Ascending aorta (tissue), 2 donors: ENCODE measurements at regions of chr5 and their contacts with region 1.

Region 1: GRCh38 chr5:123036391-123037103 is at the start of gene PPIC:
- DNase-seq: peak; percentile 19 to 92
- H3K4me3 ChIP-seq: peak within 1 kb of the TSS; percentile 68 to 97
- H3K27ac ChIP-seq: peak within 1 kb of the TSS; percentile 94 to 96
- H3K4me1 ChIP-seq: peaks cover 0 to 9% of the 10 kb centered on the region in 2 donors
- H3K27me3 ChIP-seq: no peaks in the 10 kb centered on the region
- CTCF ChIP-seq: no peak
- total RNA-seq, gene PPIC: 29.3 TPM

Region 2: DNA sequence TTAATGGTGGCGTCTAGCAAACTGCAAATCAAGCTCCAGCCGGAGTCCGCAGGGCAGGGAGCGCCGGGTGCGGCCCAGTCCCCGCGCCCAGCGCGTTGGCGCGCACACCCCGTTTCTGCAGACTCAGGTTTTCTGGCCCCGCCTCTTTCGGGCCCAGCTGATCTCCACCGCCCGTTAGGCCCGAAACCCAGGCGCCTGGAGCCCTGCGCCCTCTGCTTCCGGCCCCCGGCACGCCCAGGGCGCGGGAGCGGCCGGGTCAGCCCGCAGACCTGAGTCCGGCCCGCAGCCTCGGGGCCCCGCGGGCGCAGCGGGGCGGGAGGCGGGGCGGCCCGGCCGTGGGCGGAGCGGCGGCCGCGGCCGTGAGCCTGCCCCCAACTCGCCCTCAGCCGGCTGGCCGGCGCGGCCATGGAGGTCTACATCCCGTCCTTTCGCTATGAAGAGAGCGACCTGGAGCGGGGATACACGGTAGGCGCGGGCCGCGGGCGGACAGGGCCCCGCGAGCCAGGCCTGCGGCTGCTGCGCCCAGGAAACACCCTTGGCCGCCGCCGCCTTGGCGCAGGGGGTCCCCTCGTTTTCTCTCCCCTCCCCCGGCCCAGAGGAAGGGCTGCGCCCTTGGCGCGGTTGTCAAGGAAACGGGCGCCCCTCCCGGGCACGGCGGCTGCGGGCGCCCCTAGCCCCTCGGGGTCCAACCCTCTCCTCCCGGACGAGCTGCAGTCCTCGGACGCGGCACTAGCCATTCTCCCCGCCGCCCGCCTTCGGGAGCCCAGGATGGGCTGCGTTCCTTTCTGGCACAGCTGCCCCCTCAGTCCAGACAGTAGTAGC is 191.1 kb before region 1 on chr5 and contains the start of gene SNX24:
- intact Hi-C with region 1: loop called (anchors 5 kb)
- DNase-seq: peak; percentile 55 to 90
- H3K4me3 ChIP-seq: peak within 1 kb of the TSS; percentile 77 to 96
- H3K27ac ChIP-seq: peak within 1 kb of the TSS; percentile 90 to 91
- H3K4me1 ChIP-seq: peaks cover 8 to 15% of the 10 kb centered on the region in 2 donors
- H3K27me3 ChIP-seq: no peaks in the 10 kb centered on the region
- CTCF ChIP-seq: no peak
- total RNA-seq, gene SNX24: 21.1 TPM

Region 3: DNA sequence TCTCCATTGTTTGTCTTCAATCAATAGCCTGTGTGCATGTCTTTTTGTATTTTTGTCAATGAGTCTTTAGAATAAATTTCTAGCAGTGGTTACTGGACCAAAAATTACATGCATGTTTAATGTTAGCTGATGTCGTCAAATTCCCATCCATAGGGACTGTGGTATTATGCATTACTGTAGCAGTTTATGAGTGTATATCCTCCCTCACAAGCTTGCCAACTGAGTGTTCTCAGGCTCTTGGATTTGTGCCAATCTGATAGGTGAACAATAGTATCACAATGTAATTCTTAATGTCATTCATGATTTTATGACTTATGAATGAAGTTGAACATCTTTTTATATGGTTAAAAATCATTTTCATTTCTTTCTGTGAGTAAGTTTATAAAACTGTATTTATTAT is 178.1 kb before region 1 on chr5:
- intact Hi-C with region 1: no loop called
- DNase-seq: no peak
- H3K4me3 ChIP-seq: no peak overlapping the region
- H3K27ac ChIP-seq: no peak overlapping the region
- H3K4me1 ChIP-seq: no peaks in the 10 kb centered on the region
- H3K27me3 ChIP-seq: no peaks in the 10 kb centered on the region
- CTCF ChIP-seq: no peak

Region 4: DNA sequence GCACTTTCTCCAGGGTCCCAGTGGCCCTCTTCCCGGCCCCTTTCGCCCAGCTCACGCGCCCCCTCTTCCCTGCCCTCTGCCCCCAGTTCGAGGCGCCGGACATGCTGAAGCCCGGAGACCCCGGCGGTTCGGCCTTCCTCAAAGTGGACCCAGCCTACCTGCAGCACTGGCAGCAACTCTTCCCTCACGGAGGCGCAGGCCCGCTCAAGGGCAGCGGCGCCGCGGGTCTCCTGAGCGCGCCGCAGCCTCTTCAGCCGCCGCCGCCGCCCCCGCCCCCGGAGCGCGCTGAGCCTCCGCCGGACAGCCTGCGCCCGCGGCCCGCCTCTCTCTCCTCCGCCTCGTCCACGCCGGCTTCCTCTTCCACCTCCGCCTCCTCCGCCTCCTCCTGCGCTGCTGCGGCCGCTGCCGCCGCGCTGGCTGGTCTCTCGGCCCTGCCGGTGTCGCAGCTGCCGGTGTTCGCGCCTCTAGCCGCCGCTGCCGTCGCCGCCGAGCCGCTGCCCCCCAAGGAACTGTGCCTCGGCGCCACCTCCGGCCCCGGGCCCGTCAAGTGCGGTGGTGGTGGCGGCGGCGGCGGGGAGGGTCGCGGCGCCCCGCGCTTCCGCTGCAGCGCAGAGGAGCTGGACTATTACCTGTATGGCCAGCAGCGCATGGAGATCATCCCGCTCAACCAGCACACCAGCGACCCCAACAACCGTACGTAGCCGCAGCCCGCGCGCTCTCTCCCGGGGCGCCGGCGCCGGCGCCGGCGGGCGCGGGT is 53.5 kb after region 1 on chr5:
- intact Hi-C with region 1: loop called (anchors 2 kb)
- DNase-seq: no peak
- H3K4me3 ChIP-seq: peak overlapping the region; percentile 71 to 97
- H3K27ac ChIP-seq: peak overlapping the region; percentile 95 to 99
- H3K4me1 ChIP-seq: no peaks in the 10 kb centered on the region
- H3K27me3 ChIP-seq: no peaks in the 10 kb centered on the region
- CTCF ChIP-seq: no peak

Region 5: GRCh38 chr5:123157791-123158581 is 121.4 kb after region 1 on chr5:
- intact Hi-C with region 1: loop called (anchors 5 kb)
- DNase-seq: no peak
- H3K4me3 ChIP-seq: peak overlapping the region in 1 of 2 donors; percentile 24
- H3K27ac ChIP-seq: peak overlapping the region; percentile 79 to 82
- H3K4me1 ChIP-seq: peaks cover 5 to 55% of the 10 kb centered on the region in 2 donors
- H3K27me3 ChIP-seq: no peaks in the 10 kb centered on the region
- CTCF ChIP-seq: peak in 1 of 3 experiments; percentile 11

Region 6: GRCh38 chr5:123371575-123372179 is 335.1 kb after region 1 on chr5:
- intact Hi-C with region 1: loop called (anchors 5 kb)
- DNase-seq: peak in 1 of 2 donors; percentile 74
- H3K4me3 ChIP-seq: no peak overlapping the region
- H3K27ac ChIP-seq: no peak overlapping the region
- H3K4me1 ChIP-seq: peaks cover 0 to 8% of the 10 kb centered on the region in 2 donors
- H3K27me3 ChIP-seq: no peaks in the 10 kb centered on the region
- CTCF ChIP-seq: peak in 2 of 3 experiments; percentile 44 to 50